Heart right ventricle (tissue), 16 donors: ENCODE measurements at regions of chr6 and their contacts with region 1.

Region 1: DNA sequence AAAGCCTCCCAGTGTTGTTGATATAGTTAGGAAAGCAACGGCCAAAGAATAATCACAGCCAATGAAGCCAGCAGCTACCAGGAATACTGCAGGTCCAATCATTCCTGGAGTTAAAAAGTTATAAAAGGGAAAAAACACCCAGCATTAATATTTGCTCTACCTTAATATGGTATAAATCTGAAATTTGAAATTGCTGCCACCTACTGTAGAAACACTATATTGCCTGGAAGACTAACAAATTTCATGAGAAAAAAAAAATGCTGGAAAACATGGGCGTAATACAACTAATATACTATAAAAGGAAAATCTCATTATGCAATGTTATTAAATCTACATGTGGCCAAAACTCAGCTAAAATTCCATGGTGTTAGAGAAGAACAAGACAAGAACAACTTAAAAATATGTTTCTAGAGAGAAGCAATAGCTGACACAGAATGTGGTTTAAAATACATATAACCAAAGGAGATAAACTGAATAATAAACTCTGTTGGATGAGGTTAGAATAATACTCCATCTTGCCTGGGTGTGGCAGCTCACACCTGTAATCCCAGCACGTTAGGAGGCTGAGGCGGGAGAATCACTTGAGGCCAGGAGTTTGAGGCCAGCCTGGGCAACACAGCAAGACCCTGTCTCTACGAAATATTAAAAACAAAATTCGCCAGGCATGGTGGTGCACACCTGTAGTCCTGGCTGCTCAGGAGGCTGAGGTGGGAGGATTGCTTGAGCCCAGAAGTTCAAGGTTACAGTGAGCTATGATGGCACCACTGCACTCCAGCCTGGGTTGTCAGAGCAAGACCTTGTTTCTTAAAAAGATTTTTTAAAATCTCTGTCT is 43.1 kb downstream of the SLC17A5 start:
- DNase-seq: no peak
- ATAC-seq: peak in 7 of 8 donors; percentile 42 to 67 (median 46)
- H3K4me3 ChIP-seq: no peak overlapping the region
- H3K27ac ChIP-seq: no peak overlapping the region
- H3K4me1 ChIP-seq: peaks cover 0 to 8% (median 0%) of the 10 kb centered on the region in 9 donors
- H3K27me3 ChIP-seq: no peaks in the 10 kb centered on the region
- CTCF ChIP-seq: peak; percentile 50 to 82 (median 72)

Region 2: GRCh38 chr6:73515204-73515655 is 95.4 kb before region 1 on chr6:
- intact Hi-C with region 1: loop called (anchors 1 to 5 kb)
- DNase-seq: no peak
- ATAC-seq: no peak
- H3K4me3 ChIP-seq: no peak overlapping the region
- H3K27ac ChIP-seq: peak overlapping the region in 3 of 10 donors; percentile 13 to 33 (median 15)
- H3K4me1 ChIP-seq: peaks cover 4 to 49% (median 29%) of the 10 kb centered on the region in 9 donors
- H3K27me3 ChIP-seq: no peaks in the 10 kb centered on the region
- CTCF ChIP-seq: no peak

Region 3: GRCh38 chr6:73580247-73581149 is 30.2 kb before region 1 on chr6:
- intact Hi-C with region 1: loop called in 1 of 10 experiments (anchors 1 kb)
- DNase-seq: peak; percentile 71 to 82
- ATAC-seq: peak; percentile 89 to 96 (median 94)
- H3K4me3 ChIP-seq: peak overlapping the region in 8 of 10 donors; percentile 2 to 40 (median 34)
- H3K27ac ChIP-seq: peak overlapping the region; percentile 79 to 95 (median 88)
- H3K4me1 ChIP-seq: peaks cover 6 to 43% (median 18%) of the 10 kb centered on the region in 9 donors
- H3K27me3 ChIP-seq: no peaks in the 10 kb centered on the region
- CTCF ChIP-seq: peak in 8 of 9 donors; percentile 11 to 59 (median 48)